ENCODE measurements at regions of chr20 and their contacts with region 1.

Region 1: DNA sequence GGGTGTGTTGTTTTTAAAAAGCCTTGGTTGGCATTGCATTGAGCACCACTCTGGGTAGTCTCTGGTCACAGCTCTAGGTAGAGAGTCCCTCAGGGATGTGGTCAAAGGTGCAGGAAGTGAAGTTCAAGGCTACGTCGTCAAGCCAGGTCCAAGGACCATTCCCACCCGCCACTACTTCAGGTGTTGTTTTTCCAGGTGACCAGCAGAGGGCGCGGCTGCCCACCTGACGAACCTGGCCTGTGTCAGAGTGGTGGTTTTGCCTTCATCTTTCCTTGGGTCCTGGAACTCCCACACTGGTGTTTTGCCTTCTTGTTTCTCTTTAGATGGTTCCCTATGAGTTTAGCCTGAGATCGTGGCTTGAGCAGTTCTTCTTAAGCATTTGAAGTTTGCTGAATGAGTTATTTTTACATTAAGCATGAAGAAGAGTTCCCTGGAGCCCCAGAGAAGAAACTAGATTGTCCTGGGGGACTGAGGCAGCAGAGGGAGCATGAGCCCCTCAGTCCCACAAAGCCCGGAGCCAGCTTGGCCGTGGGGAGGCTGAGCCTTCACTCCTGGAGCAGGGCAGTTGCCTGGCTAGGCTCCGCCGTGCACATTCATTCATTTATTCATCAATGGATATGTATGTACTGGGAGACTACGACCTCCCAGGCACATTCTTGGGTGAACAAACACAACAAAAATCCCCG is 5.6 kb upstream of the PHACTR3 start:
- DNase-seq: no peak
- ATAC-seq: no peak
- H3K4me3 ChIP-seq: no peak overlapping the region
- H3K27ac ChIP-seq: no peak overlapping the region
- H3K4me1 ChIP-seq: no peaks in the 10 kb centered on the region
- H3K27me3 ChIP-seq: peaks cover 0 to 58% (median 3%) of the 10 kb centered on the region in 3 donors
- CTCF ChIP-seq: peak; percentile 54

Region 2: DNA sequence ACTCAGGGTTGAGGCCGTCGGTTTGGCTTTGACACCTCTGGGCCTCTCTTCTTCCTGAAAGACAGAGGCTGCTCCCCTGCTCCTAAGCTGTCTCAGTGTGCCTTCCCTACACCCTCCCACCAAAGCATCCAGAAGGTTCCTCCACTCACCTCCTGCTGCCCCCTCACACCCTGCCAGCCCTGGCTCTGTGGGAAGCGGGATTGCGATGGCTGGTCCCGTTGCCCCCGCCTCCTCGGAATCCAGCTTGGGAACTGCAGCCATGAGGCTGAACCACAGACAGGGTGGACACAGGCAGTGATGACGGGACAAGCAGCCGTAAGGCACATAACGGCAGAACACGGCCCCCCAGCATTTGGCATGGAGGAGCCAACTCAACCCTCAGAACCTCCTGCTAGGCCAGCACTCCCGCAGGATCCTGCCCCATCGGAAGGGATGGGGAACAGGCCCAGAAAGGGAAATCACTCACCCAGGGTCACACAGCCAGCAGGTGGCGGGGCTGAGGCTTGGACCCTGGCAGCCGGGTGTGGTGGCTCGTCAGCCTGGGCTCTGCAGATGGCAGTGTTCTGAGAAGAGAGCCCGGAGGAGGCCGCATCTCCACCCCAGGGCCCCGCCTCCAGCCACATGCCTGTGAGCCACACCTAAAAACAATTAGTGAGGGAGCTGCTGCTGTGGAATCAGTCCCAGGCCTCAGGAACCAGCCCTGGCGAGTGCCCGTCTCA is 145.2 kb after region 1 on chr20:
- intact Hi-C with region 1: loop called in 1 of 2 experiments (anchors 10 kb)
- DNase-seq: no peak
- ATAC-seq: no peak
- H3K4me3 ChIP-seq: no peak overlapping the region
- H3K27ac ChIP-seq: no peak overlapping the region
- H3K4me1 ChIP-seq: no peaks in the 10 kb centered on the region
- H3K27me3 ChIP-seq: peaks cover 0 to 14% (median 5%) of the 10 kb centered on the region in 3 donors
- CTCF ChIP-seq: no peak

Region 3: GRCh38 chr20:59751056-59751688 is 152.4 kb after region 1 on chr20:
- intact Hi-C with region 1: loop called (anchors 5 to 10 kb)
- DNase-seq: peak; percentile 65 to 72
- ATAC-seq: peak in 3 of 4 donors; percentile 56 to 62 (median 60)
- H3K4me3 ChIP-seq: no peak overlapping the region
- H3K27ac ChIP-seq: no peak overlapping the region
- H3K4me1 ChIP-seq: peaks cover 11% of the 10 kb centered on the region
- H3K27me3 ChIP-seq: peaks cover 0 to 73% (median 0%) of the 10 kb centered on the region in 3 donors
- CTCF ChIP-seq: peak; percentile 58